Activated CD4-positive, alpha-beta T cell treated with anti-CD3 and anti-CD28 coated beads, Interleukin-2, amount 10 ng/mL, durations not matched to agents 7 days and 5 days (primary cell): ENCODE measurements at regions of chr9 and their contacts with region 1.

Region 1: DNA sequence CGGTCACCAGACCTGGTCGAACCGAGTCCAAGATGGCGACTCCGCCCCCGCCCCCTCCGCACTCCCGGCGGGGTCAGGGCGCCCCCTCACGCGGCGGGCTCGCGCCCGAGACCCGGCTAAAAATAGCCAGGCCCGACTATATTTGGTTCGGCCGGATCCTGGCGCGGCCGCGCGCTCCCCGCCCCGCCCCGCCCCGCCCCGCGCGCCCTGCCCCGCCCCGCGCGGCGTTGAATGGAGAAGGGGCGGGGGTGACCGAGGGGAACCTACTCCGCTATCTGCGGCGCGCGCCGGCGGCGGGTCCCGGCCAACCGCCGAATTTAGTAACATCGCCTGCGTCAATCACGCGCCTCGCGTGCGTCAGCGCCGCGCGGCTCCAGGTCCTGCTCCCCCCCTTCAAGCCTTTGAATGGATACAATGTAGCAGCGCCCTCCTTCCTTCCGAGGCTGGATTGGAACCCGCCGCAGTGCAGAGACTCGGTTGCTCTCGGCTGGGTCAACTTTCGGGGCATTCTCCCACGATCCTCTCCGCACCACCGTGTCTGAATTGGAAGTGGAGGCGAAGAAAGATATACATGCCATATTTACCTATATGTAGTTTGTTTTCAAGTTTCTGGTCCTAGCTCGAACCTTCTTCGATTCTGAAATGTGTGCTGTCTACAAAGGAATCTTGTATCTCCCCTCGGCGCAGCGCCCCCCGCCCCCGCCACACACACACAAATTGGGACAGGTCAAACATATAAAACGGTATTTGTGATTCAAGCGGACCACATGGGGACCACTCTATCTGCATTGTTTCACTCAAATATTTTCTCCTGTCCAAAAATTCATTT is 1.6 kb upstream of the NR4A3 start:
- DNase-seq: peak; percentile 90
- H3K4me3 Mint-ChIP-seq: peak overlapping the region; percentile 94
- H3K27ac Mint-ChIP-seq: peak overlapping the region; percentile 90
- H3K4me1 Mint-ChIP-seq: peaks cover 52% of the 10 kb centered on the region
- H3K27me3 Mint-ChIP-seq: peaks cover 50% of the 10 kb centered on the region

Region 2: DNA sequence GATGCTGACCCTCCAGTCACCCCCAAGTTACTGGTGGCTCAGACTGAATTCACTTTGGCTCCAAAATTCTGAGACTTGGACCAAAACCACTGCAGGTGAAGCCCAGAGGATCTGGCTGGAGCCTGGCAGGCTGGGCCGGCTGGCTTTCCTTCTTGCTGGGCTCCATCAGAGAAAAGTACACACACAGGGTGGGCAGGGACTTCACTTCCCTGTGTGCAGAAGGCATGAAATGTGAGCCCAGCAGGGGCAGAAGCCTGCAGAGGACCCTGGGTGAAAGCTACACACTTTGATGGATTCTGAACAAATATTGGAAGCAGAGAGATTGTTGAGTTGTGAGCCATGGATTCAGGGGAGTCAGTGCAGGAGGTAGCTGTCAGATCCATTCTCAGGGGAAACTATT is 20.0 kb after region 1 on chr9:
- CTCF ChIA-PET with region 1: interaction called, 13 read pairs
- POLR2A ChIA-PET with region 1: no interaction called
- DNase-seq: no peak
- H3K4me3 Mint-ChIP-seq: no peak overlapping the region
- H3K27ac Mint-ChIP-seq: no peak overlapping the region
- H3K4me1 Mint-ChIP-seq: peaks cover 8% of the 10 kb centered on the region
- H3K27me3 Mint-ChIP-seq: no peaks in the 10 kb centered on the region

Region 3: GRCh38 chr9:99859243-99859980 is 39.3 kb after region 1 on chr9:
- CTCF ChIA-PET with region 1: interaction called, 7 read pairs
- POLR2A ChIA-PET with region 1: interaction called, 12 read pairs
- DNase-seq: no peak
- H3K4me3 Mint-ChIP-seq: no peak overlapping the region
- H3K27ac Mint-ChIP-seq: no peak overlapping the region
- H3K4me1 Mint-ChIP-seq: no peaks in the 10 kb centered on the region
- H3K27me3 Mint-ChIP-seq: no peaks in the 10 kb centered on the region

Region 4: GRCh38 chr9:99967457-99967856 is 147.4 kb after region 1 on chr9:
- CTCF ChIA-PET with region 1: interaction called, 4 read pairs
- POLR2A ChIA-PET with region 1: interaction called, 12 read pairs
- DNase-seq: no peak
- H3K4me3 Mint-ChIP-seq: no peak overlapping the region
- H3K27ac Mint-ChIP-seq: no peak overlapping the region
- H3K4me1 Mint-ChIP-seq: no peaks in the 10 kb centered on the region
- H3K27me3 Mint-ChIP-seq: no peaks in the 10 kb centered on the region